ENCODE measurements at regions of chr18 and their contacts with region 1.

Region 1: GRCh38 chr18:32552421-32553030 is 81.8 kb upstream of the GAREM1 start:
- DNase-seq: peak in 3 of 5 donors; percentile 47 to 64 (median 54)
- H3K4me3 ChIP-seq: no peak overlapping the region
- H3K27ac ChIP-seq: no peak overlapping the region
- H3K4me1 ChIP-seq: no peaks in the 10 kb centered on the region
- H3K27me3 ChIP-seq: no peaks in the 10 kb centered on the region
- CTCF ChIP-seq: peak; percentile 72

Region 2: GRCh38 chr18:32158108-32158624 is 394.4 kb before region 1 on chr18:
- intact Hi-C with region 1: loop called (anchors 5 kb)
- DNase-seq: peak; percentile 77 to 97 (median 92)
- H3K4me3 ChIP-seq: peak overlapping the region; percentile 46 to 77 (median 63)
- H3K27ac ChIP-seq: no peak overlapping the region
- H3K4me1 ChIP-seq: peaks cover 0 to 2% (median 0%) of the 10 kb centered on the region in 3 donors
- H3K27me3 ChIP-seq: no peaks in the 10 kb centered on the region
- CTCF ChIP-seq: peak; percentile 96

Region 3: GRCh38 chr18:32289483-32290075 is 262.9 kb before region 1 on chr18:
- intact Hi-C with region 1: no loop called
- DNase-seq: peak in 3 of 5 donors; percentile 39 to 75 (median 58)
- H3K4me3 ChIP-seq: no peak overlapping the region
- H3K27ac ChIP-seq: no peak overlapping the region
- H3K4me1 ChIP-seq: no peaks in the 10 kb centered on the region
- H3K27me3 ChIP-seq: no peaks in the 10 kb centered on the region
- CTCF ChIP-seq: peak; percentile 55

Measured in kidney (tissue), 22 donors.